HEK293T (cell line): ENCODE measurements at regions of chr1 and their contacts with region 1.

Region 1: DNA sequence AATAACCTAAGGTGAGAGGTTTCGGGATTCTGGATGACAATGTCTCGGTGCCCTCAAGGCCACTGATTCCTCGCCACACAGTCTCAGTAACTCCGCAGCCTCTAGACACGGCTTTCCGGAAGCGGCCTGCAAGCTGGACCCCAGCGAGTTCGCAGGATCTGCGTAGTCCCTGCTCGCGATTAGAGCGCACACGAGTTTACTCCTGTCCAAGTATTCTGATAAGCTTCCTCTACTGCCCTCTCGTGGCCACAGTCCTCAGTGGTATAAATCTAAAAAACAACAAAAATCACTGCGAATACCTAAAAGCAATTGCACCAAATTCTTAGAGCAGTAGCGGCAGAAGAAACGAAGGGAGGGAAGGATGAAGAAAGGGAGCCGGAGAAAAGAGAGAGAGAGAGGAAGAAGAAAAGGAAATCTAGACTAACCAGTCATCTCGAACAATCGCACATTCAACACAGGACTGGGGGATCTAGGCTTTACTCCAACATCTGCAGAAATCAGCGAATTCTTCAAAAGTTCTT is 1.1 kb upstream of the PLXNA2 start:
- DNase-seq: peak; percentile 86

Region 2: GRCh38 chr1:208025031-208025430 is 220.2 kb before region 1 on chr1:
- CTCF ChIA-PET with region 1: interaction called, 45 read pairs
- POLR2A ChIA-PET with region 1: interaction called, 4 read pairs
- DNase-seq: no peak

Region 3: GRCh38 chr1:208132287-208132883 is 112.9 kb before region 1 on chr1:
- CTCF ChIA-PET with region 1: interaction called, 17 read pairs
- POLR2A ChIA-PET with region 1: interaction called, 3 read pairs
- DNase-seq: peak; percentile 92

Region 4: DNA sequence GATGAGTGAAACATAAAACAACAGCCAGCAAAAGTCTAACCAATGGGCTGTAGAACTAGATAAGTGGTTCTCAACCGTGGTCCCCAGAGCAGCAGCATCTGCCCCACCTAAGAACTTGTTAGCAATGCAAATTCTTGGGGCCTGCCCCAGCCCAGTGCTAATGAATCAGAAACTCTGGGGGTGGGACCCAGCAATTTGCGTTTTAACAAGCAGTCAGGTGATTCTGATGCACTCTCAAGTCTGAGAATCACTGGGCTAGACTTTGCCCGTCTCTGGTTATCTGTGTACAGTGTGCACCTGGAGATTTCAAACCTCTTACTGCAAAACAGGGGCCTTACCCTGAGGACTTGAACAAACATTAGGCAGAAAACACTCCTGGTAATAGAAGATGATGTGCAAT is 67.6 kb before region 1 on chr1:
- CTCF ChIA-PET with region 1: interaction called, 11 read pairs
- POLR2A ChIA-PET with region 1: interaction called, 3 read pairs
- DNase-seq: no peak